A549 (cell line): ENCODE measurements at regions of chr19 and their contacts with region 1.

Region 1: DNA sequence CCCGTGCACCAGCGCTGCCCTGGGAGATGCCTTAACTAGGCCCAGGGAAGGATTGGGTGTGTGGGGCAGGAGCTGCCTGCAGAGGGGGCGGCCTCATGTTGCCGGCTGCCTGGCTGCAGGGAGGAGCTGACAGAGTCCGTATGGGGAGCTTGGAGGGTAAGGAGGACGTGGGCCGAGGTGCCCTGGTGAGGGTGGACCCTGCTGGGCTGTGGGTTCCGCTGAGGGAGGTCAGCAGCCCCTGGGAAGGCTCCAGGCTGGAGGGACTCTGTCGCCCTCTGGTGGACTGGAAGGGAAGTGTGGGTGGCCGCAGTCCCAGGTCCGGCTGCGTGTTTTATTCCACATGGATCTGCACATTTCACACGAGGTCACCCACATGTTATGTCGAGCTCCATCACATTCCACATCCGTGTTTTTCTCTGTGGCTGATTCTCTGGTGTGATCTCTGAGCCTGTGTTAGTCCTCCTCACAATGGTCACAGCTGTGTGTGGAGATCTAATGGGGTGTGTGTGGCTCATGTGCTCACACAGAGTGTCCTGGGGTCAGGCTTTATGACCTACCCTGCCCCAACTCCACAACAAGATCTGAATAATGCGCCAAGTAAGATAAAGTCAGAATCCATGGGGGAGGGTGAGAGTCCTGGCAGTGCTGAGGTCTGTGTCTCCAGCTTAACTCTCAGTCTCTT is 1.8 kb upstream of the CEACAM8 start:
- DNase-seq: peak; percentile 36 to 64
- ATAC-seq: peak; percentile 44 to 90; a peak in 5 of 6 replicates
- H3K4me3 ChIP-seq: no peak overlapping the region
- H3K27ac ChIP-seq: no peak overlapping the region
- H3K4me1 ChIP-seq: no peaks in the 10 kb centered on the region
- CTCF ChIP-seq: peak; percentile 96
- EP300 ChIP-seq: no peak
- POLR2A ChIP-seq: no peak
- RAD21 ChIP-seq: peak; percentile 70 to 77

Region 2: DNA sequence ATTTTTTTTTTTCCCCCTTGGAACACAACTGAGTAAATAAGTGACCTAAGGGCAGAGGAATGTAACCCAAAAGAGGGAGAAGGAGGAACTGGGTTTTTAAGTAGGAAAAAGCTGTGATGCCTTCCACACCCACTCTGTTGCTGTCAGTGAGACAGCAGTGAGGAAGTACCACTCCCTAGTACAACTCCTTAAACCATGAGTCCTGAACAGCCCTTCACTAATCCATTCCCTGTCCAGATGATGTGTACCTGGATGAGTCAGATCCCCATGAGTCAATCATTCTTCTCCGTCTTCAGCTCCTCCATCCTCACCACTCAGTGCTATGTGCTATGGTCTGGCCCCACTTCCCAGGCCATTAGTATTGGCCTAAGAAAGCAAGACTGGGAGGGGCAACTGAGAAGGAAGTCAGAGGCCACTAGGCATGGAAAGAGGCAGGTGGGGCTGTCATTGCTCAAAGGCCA is 140.9 kb before region 1 on chr19:
- CTCF ChIA-PET with region 1: interaction called, 37 read pairs
- POLR2A ChIA-PET with region 1: no interaction called
- DNase-seq: peak; percentile 70 to 83
- ATAC-seq: peak; percentile 83 to 87
- H3K4me3 ChIP-seq: no peak overlapping the region
- H3K27ac ChIP-seq: no peak overlapping the region; a peak in 1 of 6 replicates
- H3K4me1 ChIP-seq: peaks cover 12% of the 10 kb centered on the region
- CTCF ChIP-seq: no peak
- EP300 ChIP-seq: no peak
- POLR2A ChIP-seq: no peak
- RAD21 ChIP-seq: no peak; a peak in 1 of 5 replicates

Region 3: GRCh38 chr19:42563352-42564210 is 33.0 kb before region 1 on chr19:
- CTCF ChIA-PET with region 1: interaction called, 83 read pairs
- POLR2A ChIA-PET with region 1: no interaction called
- DNase-seq: peak; percentile 76 to 95
- ATAC-seq: peak; percentile 79 to 91
- H3K4me3 ChIP-seq: no peak overlapping the region
- H3K27ac ChIP-seq: no peak overlapping the region
- H3K4me1 ChIP-seq: no peaks in the 10 kb centered on the region
- CTCF ChIP-seq: peak; percentile 81
- EP300 ChIP-seq: no peak
- POLR2A ChIP-seq: no peak
- RAD21 ChIP-seq: peak; percentile 77 to 78

Region 4: GRCh38 chr19:42584466-42584865 is 12.1 kb before region 1 on chr19:
- CTCF ChIA-PET with region 1: interaction called, 76 read pairs
- POLR2A ChIA-PET with region 1: no interaction called
- DNase-seq: no peak
- ATAC-seq: no peak
- H3K4me3 ChIP-seq: no peak overlapping the region
- H3K27ac ChIP-seq: no peak overlapping the region
- H3K4me1 ChIP-seq: no peaks in the 10 kb centered on the region
- CTCF ChIP-seq: no peak
- EP300 ChIP-seq: no peak
- POLR2A ChIP-seq: no peak
- RAD21 ChIP-seq: no peak

Region 5: GRCh38 chr19:42613666-42614065 is 17.1 kb after region 1 on chr19:
- CTCF ChIA-PET with region 1: interaction called, 26 read pairs
- POLR2A ChIA-PET with region 1: no interaction called
- DNase-seq: no peak
- ATAC-seq: no peak
- H3K4me3 ChIP-seq: no peak overlapping the region
- H3K27ac ChIP-seq: no peak overlapping the region
- H3K4me1 ChIP-seq: no peaks in the 10 kb centered on the region
- CTCF ChIP-seq: no peak
- EP300 ChIP-seq: no peak
- POLR2A ChIP-seq: no peak
- RAD21 ChIP-seq: no peak

Region 6: DNA sequence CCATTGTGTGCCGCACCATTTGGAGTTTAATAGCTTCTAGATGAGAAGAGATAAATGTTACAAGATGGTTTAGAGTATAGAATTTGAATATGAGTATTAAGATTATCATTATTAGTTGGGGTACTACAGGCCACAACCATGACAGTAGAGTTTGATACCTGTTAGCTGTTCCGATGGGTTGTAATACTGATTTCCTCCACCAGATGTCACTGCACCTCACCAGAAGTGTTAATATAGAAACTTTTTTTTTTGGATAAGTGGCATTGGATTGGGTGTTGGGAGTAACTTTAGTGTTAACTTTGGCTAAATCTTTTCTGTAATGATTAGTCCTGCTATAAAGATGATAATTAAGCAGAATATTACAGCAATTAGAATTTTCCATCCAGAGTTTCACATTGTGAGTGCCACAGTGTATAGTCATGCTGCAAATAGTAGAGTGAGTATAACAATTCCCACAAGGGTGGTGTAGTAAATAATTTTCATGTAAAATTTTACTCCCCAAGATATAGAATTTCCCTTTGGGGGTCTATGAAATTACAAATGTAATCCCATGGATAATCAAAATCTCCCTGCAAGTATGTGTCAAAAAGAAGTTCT is 87.5 kb after region 1 on chr19:
- CTCF ChIA-PET with region 1: interaction called, 12 read pairs
- POLR2A ChIA-PET with region 1: no interaction called
- DNase-seq: peak; percentile 54 to 63
- ATAC-seq: peak in 1 of 2 experiments; percentile 70; a peak in 3 of 6 replicates
- H3K4me3 ChIP-seq: no peak overlapping the region
- H3K27ac ChIP-seq: no peak overlapping the region
- H3K4me1 ChIP-seq: no peaks in the 10 kb centered on the region
- CTCF ChIP-seq: peak; percentile 88
- EP300 ChIP-seq: no peak
- POLR2A ChIP-seq: no peak
- RAD21 ChIP-seq: peak; percentile 64 to 79